Activated CD4-positive, alpha-beta T cell treated with anti-CD3 and anti-CD28 coated beads for 36 hours (primary cell): ENCODE measurements at regions of chr15 and their contacts with region 1.

Region 1: GRCh38 chr15:79041601-79042168 is 48.9 kb downstream of the RASGRF1 start:
- DNase-seq: no peak
- ATAC-seq: no peak
- H3K4me3 Mint-ChIP-seq: no peak overlapping the region
- H3K27ac Mint-ChIP-seq: no peak overlapping the region
- H3K4me1 Mint-ChIP-seq: no peaks in the 10 kb centered on the region
- H3K27me3 Mint-ChIP-seq: peaks cover 18% of the 10 kb centered on the region

Region 2: DNA sequence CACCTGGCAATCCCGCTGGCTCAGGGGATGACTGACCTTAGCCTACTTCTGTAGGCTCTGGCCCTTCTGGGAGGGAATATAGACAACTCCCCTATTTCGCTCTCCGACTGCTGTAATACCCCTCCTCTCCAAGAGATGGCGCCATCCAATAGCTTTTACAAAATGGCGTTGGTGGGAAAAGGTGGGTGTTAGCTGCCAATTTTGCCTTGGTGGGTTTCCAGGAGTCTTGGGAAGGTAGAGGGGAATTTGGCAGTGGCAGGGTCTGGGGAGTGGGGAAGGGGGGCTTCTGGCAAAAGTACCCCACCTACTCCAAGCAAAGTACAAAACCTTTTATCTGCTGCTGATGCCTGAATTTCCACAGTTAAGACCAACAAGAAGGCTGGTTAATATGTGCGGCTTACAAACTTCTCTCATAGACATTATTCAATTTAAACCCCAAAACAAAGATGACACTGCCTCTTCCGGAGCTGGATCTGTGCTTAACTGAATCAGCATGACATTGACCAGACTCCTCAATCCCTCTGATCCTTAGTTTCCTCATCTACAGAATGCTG is 13.2 kb before region 1 on chr15:
- CTCF ChIA-PET with region 1: interaction called, 14 read pairs
- POLR2A ChIA-PET with region 1: no interaction called
- intact Hi-C with region 1: no loop called
- DNase-seq: peak; percentile 61
- ATAC-seq: no peak
- H3K4me3 Mint-ChIP-seq: no peak overlapping the region
- H3K27ac Mint-ChIP-seq: no peak overlapping the region
- H3K4me1 Mint-ChIP-seq: no peaks in the 10 kb centered on the region
- H3K27me3 Mint-ChIP-seq: peaks cover 5% of the 10 kb centered on the region